Esophagus muscularis mucosa (tissue), 4 donors: ENCODE measurements at regions of chr4 and their contacts with region 1.

Region 1: DNA sequence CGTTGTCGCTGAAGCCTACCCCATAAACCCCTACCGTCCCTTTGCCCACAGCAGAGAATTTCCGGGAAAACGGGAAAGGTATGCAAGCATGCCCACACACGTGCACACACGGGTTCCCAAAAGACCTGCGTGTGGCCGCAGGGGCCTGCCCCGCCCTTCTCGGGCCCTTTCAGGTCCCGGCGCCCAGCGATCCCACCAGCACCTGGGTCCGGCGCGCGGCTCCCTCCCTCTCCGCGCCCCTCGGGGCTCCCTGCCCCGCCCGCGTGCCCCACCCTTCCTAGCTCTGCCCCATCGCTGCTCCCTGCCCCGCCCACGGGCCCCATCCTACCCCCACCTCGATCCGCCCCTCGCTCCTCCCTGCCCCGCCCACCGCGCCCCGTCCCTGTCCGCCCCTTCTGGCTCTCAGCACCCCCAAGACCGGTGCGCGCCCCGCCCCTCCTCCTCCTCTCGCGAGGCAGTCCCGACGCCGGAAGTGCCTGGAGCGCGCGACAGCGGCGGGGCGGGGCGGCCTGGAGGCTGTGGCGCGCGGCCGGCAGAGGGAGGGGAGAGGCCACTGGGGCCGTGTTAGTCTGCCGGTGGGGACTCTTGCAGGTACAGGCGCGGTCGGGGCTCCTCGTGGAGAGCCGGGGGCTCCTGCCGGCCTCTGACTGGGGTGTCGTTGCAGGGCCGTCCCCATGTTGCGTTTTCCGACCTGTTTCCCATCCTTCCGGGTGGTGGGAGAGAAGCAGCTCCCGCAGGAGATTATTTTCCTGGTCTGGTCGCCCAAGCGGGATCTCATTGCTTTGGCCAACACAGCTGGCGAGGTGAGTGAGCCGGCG is at the start of gene ANAPC4:
- DNase-seq: peak; percentile 98
- H3K4me3 ChIP-seq: peak within 1 kb of the TSS; percentile 73 to 92 (median 84)
- H3K27ac ChIP-seq: peak within 1 kb of the TSS; percentile 76 to 82 (median 77)
- H3K4me1 ChIP-seq: peaks cover 0 to 35% (median 23%) of the 10 kb centered on the region in 4 donors
- H3K27me3 ChIP-seq: no peaks in the 10 kb centered on the region
- CTCF ChIP-seq: peak in 2 of 3 experiments; percentile 15 to 17
- EP300 ChIP-seq: no peak
- POLR2A ChIP-seq: peak; percentile 57
- total RNA-seq, gene ANAPC4: 17.2 to 25.3 (median 19.0) TPM

Region 2: DNA sequence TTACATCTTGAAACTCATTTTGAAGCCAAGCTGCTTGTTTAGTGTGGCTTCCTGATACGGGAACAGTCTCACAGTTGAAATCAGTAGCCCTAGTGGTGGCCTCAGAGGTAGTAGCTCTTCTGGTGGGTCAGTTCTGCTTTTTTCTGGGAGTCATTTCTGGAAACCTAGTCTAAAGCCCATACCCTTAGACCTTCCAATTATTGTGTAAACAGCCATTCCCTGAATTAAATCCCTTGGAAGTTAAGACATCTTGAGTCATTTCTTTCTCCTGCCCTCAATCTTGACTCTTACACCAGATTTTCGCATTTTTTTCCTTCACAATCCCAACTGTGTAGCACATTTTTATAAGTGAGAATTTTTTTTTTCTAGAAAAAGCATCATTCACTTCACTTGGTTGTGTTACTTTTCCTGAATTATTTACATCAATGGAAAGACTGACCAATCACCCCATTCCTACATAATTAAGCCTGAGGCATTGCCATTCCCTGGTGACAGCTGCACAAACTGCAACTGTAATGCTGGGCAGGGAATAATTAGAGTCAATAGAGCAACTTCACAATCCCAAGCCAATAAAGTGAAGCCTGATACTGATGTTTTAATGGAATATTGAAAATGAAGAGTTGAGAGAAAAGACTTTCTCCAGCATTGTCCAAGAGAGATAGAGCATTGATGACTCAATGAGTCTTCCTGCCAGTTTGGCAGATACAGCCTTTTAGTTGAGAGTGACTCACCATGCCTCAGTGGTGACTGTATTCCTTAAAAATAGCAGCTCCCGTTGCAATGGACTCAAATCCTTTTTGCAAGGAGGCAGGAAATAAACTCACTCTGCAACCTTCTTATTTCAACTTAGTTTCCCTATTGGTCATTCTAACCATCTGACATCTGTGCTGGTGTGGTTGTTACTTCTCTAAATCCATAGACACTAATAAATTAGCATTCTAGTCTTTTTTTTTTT is 203.7 kb before region 1 on chr4:
- intact Hi-C with region 1: loop called (anchors 10 kb)
- DNase-seq: no peak
- H3K4me3 ChIP-seq: no peak overlapping the region
- H3K27ac ChIP-seq: peak overlapping the region; percentile 40 to 56 (median 50)
- H3K4me1 ChIP-seq: peaks cover 17 to 22% (median 20%) of the 10 kb centered on the region in 4 donors
- H3K27me3 ChIP-seq: no peaks in the 10 kb centered on the region
- CTCF ChIP-seq: no peak
- EP300 ChIP-seq: no peak
- POLR2A ChIP-seq: no peak